ENCODE measurements at regions of chr1 and their contacts with region 1.

Region 1: GRCh38 chr1:82013702-82014101 is 213.0 kb downstream of the ADGRL2 start:
- DNase-seq: no peak
- ATAC-seq: no peak

Region 2: GRCh38 chr1:81950591-81951244 is 63.0 kb before region 1 on chr1:
- intact Hi-C with region 1: no loop called
- DNase-seq: no peak
- ATAC-seq: no peak

Region 3: GRCh38 chr1:82632155-82632554 is 618.5 kb after region 1 on chr1:
- intact Hi-C with region 1: loop called (anchors 5 kb)
- DNase-seq: no peak
- ATAC-seq: no peak